ENCODE measurements at regions of chr6 and their contacts with region 1.

Region 1: DNA sequence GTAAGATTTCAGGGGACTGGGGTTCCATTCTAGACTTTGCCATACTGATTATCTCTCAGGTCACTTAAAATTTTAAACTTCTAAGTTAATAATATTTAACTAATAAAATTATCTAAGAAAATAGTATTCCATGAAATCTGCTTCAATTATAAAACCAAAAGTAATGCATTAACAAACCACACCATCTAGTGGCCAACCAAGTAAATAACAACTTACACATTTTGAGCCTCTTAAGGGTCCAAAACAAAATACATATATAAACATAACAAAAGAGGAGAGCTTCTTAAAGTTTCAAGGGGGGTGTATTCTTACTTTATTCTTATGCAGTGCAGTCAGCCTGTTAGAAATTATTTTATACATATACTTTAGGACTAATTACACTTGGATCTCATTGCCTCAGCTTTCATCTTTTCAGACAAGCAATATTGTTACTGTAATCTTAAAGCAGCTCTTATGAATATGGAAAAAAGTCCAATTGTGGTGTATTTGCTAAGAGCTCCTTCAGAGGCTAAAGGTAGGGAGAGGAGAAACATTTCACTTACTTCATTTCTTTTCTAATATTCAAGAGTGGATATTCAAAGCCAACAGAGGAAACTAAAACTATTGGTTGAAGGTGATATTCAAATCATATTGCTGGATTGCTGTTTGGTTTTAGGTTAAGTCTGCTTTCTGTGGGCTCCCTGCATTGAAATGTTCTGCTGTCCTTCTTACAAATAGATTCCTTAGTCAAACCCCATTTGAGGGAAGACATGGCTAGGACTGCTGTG is 199.7 kb upstream of the SIM1 start:
- DNase-seq: no peak
- ATAC-seq: no peak
- H3K4me3 ChIP-seq: no peak overlapping the region
- H3K27ac ChIP-seq: no peak overlapping the region
- H3K4me1 ChIP-seq: no peaks in the 10 kb centered on the region
- H3K27me3 ChIP-seq: no peaks in the 10 kb centered on the region

Region 2: GRCh38 chr6:100116411-100117194 is 547.9 kb before region 1 on chr6:
- intact Hi-C with region 1: loop called (anchors 5 kb)
- DNase-seq: no peak
- ATAC-seq: no peak
- H3K4me3 ChIP-seq: no peak overlapping the region
- H3K27ac ChIP-seq: no peak overlapping the region
- H3K4me1 ChIP-seq: no peaks in the 10 kb centered on the region
- H3K27me3 ChIP-seq: no peaks in the 10 kb centered on the region

Region 3: GRCh38 chr6:100493227-100493911 is 171.1 kb before region 1 on chr6:
- intact Hi-C with region 1: loop called in 1 of 2 experiments (anchors 10 kb)
- DNase-seq: no peak
- ATAC-seq: no peak
- H3K4me3 ChIP-seq: no peak overlapping the region
- H3K27ac ChIP-seq: no peak overlapping the region
- H3K4me1 ChIP-seq: no peaks in the 10 kb centered on the region
- H3K27me3 ChIP-seq: no peaks in the 10 kb centered on the region